ENCODE measurements at regions of chr2 and their contacts with region 1.

Region 1: GRCh38 chr2:67840460-67841068 is 222.2 kb downstream of the C1D start:
- DNase-seq: no peak
- H3K4me3 ChIP-seq: no peak overlapping the region
- H3K27ac ChIP-seq: no peak overlapping the region
- H3K4me1 ChIP-seq: peaks cover 0 to 18% (median 14%) of the 10 kb centered on the region in 4 donors
- H3K27me3 ChIP-seq: no peaks in the 10 kb centered on the region
- CTCF ChIP-seq: peak; percentile 86
- EP300 ChIP-seq: no peak
- POLR2A ChIP-seq: no peak

Region 2: GRCh38 chr2:66574701-66575624 is 1265.6 kb before region 1 on chr2:
- intact Hi-C with region 1: loop called (anchors 5 kb)
- DNase-seq: peak; percentile 95
- H3K4me3 ChIP-seq: peak overlapping the region; percentile 65 to 73 (median 68)
- H3K27ac ChIP-seq: peak overlapping the region; percentile 95 to 98 (median 97)
- H3K4me1 ChIP-seq: peaks cover 22 to 98% (median 69%) of the 10 kb centered on the region in 4 donors
- H3K27me3 ChIP-seq: peaks cover 0 to 33% (median 4%) of the 10 kb centered on the region in 4 donors
- CTCF ChIP-seq: peak; percentile 46 to 69 (median 51)
- EP300 ChIP-seq: no peak
- POLR2A ChIP-seq: no peak

Region 3: DNA sequence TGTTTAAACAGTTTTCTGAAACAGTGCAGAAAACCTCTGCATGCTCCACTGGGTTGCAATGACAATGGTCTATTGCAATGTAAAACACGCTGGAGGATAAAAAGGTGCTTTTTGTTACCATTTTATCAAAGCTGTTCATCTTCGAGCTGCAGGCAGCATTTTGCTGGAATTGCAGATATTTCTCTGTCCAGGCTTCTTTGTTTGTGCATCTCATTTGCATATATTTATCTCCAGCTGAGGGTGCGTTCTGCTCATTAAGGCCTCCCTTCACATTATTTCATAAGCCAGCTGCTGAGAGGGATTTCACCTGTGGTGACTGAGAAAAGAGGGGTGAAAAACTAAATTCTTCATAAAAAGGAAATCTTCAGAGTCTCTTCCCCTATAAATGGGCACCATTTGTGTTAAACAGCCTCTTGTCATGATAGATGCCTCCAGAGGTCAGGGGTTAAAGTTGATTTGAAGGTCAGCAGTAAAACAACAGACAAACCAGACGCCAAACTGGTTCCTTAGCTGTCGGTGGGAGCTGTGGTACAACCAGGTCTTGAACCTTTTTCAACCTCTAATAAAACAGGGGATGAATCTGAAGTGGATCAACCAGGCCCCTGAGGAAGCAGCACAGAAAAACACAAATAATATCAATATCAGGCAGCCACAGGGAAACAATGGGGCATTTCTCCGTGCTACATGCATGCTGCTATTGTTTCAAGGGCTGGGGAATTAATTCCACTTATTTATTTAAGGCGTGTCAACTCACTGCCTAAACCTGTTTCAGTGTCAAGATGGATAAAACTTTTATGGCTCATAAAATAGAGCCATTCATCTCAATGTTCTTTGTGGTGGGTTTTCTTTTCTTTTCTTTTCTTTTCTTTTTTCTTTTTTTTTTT is 1140.5 kb before region 1 on chr2:
- intact Hi-C with region 1: loop called (anchors 10 kb)
- DNase-seq: no peak
- H3K4me3 ChIP-seq: peak overlapping the region in 2 of 4 donors; percentile 6 to 8
- H3K27ac ChIP-seq: peak overlapping the region; percentile 78 to 85 (median 84)
- H3K4me1 ChIP-seq: peaks cover 0 to 75% (median 70%) of the 10 kb centered on the region in 4 donors
- H3K27me3 ChIP-seq: no peaks in the 10 kb centered on the region
- CTCF ChIP-seq: no peak
- EP300 ChIP-seq: no peak
- POLR2A ChIP-seq: no peak

Region 4: GRCh38 chr2:66957198-66957597 is 883.4 kb before region 1 on chr2:
- intact Hi-C with region 1: loop called (anchors 10 kb)
- DNase-seq: no peak
- H3K4me3 ChIP-seq: no peak overlapping the region
- H3K27ac ChIP-seq: peak overlapping the region in 3 of 4 donors; percentile 10 to 66 (median 42)
- H3K4me1 ChIP-seq: peaks cover 0 to 38% (median 27%) of the 10 kb centered on the region in 4 donors
- H3K27me3 ChIP-seq: no peaks in the 10 kb centered on the region
- CTCF ChIP-seq: no peak
- EP300 ChIP-seq: peak; percentile 16
- POLR2A ChIP-seq: no peak

Region 5: GRCh38 chr2:67322353-67323001 is 518.1 kb before region 1 on chr2:
- intact Hi-C with region 1: loop called (anchors 10 kb)
- DNase-seq: no peak
- H3K4me3 ChIP-seq: no peak overlapping the region
- H3K27ac ChIP-seq: peak overlapping the region; percentile 5 to 53 (median 24)
- H3K4me1 ChIP-seq: peaks cover 9 to 43% (median 29%) of the 10 kb centered on the region in 4 donors
- H3K27me3 ChIP-seq: no peaks in the 10 kb centered on the region
- CTCF ChIP-seq: peak in 2 of 3 experiments; percentile 51 to 63
- EP300 ChIP-seq: no peak
- POLR2A ChIP-seq: no peak

Region 6: GRCh38 chr2:67476809-67477790 is 363.5 kb before region 1 on chr2:
- intact Hi-C with region 1: loop called (anchors 5 kb)
- DNase-seq: no peak
- H3K4me3 ChIP-seq: no peak overlapping the region
- H3K27ac ChIP-seq: no peak overlapping the region
- H3K4me1 ChIP-seq: peaks cover 0 to 19% (median 14%) of the 10 kb centered on the region in 4 donors
- H3K27me3 ChIP-seq: no peaks in the 10 kb centered on the region
- CTCF ChIP-seq: peak; percentile 46 to 57 (median 49)
- EP300 ChIP-seq: no peak
- POLR2A ChIP-seq: no peak